ENCODE measurements at regions of chr18 and their contacts with region 1.

Region 1: DNA sequence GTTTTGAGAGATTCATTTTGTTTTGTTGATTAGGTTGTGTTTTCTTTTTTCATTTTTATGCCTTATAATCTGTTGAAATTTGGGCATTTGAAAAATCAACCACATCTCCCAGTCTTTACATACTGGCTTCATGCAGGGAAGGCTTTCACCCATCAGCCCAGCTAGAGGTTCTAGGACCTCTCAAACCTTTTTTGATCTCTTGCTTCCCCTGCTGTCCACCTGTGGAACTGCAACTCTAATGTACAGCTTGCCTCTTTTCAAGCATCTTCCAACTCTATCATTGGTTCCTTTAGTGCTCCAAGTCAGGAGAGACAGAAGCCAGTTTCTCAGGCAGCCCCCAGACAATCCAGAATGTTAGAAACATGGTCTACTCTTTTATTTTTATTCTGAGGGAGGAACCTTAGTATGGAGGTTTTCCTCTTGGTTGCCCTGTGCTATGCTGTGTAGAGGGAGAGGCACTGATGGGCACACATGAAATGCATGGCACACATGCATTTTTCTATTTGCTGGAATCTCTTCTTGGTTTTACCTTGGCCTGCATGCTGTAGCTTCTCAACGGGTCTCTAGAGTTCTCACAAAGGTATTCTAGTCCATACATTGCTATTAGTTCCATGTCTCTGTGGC is 107.2 kb upstream of the L3MBTL4 start:
- DNase-seq: peak; percentile 56
- H3K4me3 ChIP-seq: no peak overlapping the region
- H3K27ac ChIP-seq: no peak overlapping the region
- H3K4me1 ChIP-seq: no peaks in the 10 kb centered on the region
- H3K27me3 ChIP-seq: no peaks in the 10 kb centered on the region
- CTCF ChIP-seq: peak; percentile 85 to 94

Region 2: DNA sequence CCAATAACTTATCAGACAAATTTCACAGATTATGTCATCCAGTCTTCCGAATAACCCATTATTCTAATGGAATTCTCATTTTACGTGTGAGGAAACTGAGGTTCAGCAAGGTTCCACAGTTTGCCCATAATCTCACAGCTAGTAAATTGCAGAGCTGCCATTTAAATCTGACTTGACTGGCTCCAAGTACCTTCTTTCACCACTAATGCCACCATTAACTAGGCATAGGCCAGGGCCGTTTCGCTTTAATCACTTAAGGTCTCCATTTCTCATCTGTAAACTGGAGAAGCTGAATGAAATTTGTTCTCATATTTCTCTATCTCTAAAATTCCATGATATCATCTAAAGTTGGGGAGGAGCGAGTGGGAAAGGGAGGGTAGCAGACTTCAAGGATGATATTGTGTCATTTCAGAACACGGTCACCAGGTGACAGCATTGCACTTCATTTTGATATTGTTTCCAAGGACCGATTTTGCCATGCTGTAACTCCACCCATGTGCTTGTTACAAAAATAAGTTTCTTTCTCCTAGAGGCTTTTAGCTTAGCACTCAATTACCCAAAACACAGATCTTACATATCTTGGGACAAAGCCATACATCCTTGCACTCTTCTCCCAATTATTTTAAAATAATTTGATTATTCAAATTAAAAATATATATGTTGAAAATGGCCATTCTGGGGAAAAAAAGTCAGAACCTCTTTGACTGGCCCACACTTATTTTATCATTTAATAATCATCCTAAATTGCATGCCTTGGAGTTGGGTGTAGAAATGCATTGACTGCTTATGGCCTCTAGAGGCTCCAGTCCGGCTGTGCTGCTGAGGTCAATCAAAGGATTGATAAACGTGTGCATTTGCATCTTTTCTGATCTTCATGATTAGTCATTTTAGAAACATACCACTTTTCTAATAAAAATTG is 1448.6 kb before region 1 on chr18:
- CTCF ChIA-PET with region 1: no interaction called
- dilution Hi-C with region 1: no loop called
- in situ Hi-C with region 1: no loop called
- intact Hi-C with region 1: loop called (anchors 5 kb)
- DNase-seq: peak; percentile 4
- H3K4me3 ChIP-seq: no peak overlapping the region
- H3K27ac ChIP-seq: no peak overlapping the region
- H3K4me1 ChIP-seq: no peaks in the 10 kb centered on the region
- H3K27me3 ChIP-seq: no peaks in the 10 kb centered on the region
- CTCF ChIP-seq: peak; percentile 34 to 54

Region 3: GRCh38 chr18:5600378-5601071 is 921.4 kb before region 1 on chr18:
- CTCF ChIA-PET with region 1: no interaction called
- dilution Hi-C with region 1: no loop called
- in situ Hi-C with region 1: no loop called
- intact Hi-C with region 1: loop called (anchors 5 kb)
- DNase-seq: no peak
- H3K4me3 ChIP-seq: no peak overlapping the region
- H3K27ac ChIP-seq: no peak overlapping the region
- H3K4me1 ChIP-seq: no peaks in the 10 kb centered on the region
- H3K27me3 ChIP-seq: no peaks in the 10 kb centered on the region
- CTCF ChIP-seq: no peak

Region 4: GRCh38 chr18:6482198-6482977 is 39.5 kb before region 1 on chr18:
- CTCF ChIA-PET with region 1: no interaction called
- dilution Hi-C with region 1: no loop called
- in situ Hi-C with region 1: no loop called
- intact Hi-C with region 1: loop called (anchors 5 kb)
- DNase-seq: peak; percentile 93
- H3K4me3 ChIP-seq: no peak overlapping the region
- H3K27ac ChIP-seq: peak overlapping the region; percentile 29
- H3K4me1 ChIP-seq: peaks cover 7% of the 10 kb centered on the region
- H3K27me3 ChIP-seq: no peaks in the 10 kb centered on the region
- CTCF ChIP-seq: peak in 1 of 2 donors; percentile 37

Region 5: DNA sequence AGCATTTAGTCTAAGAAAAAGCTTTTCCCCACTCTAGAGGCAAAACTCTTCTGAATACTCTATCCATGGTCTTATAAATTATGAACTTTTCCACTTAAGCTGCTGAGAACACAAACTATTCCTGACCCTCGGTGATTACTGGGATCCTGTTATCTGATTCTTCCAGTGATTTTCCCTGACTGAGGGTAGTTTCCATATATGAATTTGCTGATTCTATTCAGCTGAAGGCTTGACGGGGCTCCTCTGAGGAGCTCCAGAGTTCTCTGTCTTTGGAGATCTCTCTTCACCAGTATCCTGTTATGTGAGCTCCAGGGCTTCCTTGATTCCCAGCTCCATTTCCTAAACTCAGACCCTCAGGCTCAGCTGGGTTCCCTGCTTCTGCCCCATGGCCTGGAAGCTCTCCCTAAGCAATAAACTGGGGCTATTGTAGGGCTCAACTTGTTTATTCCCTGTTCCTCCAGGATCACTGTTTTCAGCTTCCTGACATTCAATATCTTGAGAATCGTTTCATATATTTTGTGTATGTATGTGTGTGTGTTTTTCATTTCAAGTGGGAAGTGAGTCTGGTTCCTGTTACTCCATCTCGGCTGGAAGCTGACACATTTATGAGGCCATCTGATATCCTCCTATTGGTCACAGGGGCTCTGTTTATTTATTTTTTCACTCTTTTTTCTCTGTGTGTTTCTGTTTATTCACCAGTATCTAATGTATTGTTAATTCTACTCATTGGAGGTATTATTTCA is 285.8 kb after region 1 on chr18:
- CTCF ChIA-PET with region 1: no interaction called
- dilution Hi-C with region 1: no loop called
- in situ Hi-C with region 1: no loop called
- intact Hi-C with region 1: no loop called
- DNase-seq: no peak
- H3K4me3 ChIP-seq: no peak overlapping the region
- H3K27ac ChIP-seq: no peak overlapping the region
- H3K4me1 ChIP-seq: no peaks in the 10 kb centered on the region
- H3K27me3 ChIP-seq: peaks cover 3% of the 10 kb centered on the region
- CTCF ChIP-seq: no peak